ENCODE measurements at regions of chr1 and their contacts with region 1.

Region 1: DNA sequence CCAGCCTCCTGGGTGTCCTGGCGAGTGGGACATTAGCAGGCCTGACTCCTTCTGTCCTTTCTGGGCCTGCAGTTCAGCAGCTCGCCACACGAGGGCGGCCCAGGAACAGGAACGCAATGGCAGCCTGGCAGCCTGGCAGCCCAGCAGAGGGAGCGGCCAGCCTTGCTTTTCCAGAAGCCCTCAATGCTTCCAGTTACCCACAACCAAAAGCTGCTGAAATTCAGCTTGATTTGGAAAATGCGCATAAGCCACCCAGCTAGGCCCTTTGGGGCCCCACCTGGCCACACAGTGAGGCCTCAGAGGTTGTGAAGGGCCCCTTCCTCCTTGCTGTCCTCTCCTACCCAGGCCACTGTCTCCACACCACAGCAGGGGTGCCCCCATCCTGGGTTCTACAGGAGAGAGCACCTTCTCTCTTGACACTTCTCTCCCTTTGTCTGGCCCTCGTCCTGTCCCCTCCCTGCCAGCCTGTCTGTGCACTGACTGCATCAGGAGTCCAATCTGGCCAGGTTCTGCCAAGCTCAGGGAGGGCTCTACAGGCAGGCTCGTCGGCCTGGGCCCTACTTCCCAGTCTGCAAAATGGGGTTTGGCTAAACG is 103.4 kb upstream of the VAMP3 start:
- DNase-seq: peak; percentile 69 to 81
- ATAC-seq: peak; percentile 83 to 85
- H3K4me3 ChIP-seq: no peak overlapping the region
- H3K27ac ChIP-seq: no peak overlapping the region
- H3K4me1 ChIP-seq: peaks cover 4 to 6% of the 10 kb centered on the region in 2 donors
- H3K27me3 ChIP-seq: no peaks in the 10 kb centered on the region
- CTCF ChIP-seq: peak; percentile 99 to 100 (median 100)
- POLR2A ChIP-seq: no peak

Region 2: DNA sequence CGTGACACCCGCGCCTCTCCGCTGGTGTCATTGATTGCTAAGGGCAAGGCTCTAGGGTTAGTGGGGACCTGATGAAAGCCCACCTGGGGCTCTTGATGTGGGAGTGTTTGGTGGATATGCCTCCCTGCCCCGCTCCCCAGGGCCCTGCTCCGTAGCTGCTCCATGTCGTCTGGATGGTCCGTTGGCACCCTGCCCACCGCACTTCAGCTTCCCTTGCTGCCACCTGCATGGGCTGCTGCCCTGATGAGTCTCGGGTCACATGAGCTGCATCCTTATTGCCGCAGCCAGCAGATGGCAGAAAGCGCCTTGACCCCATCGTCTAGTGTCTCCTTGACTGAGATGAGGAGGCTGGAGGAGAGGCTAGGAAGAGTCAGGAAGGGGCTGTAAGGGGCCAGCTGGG is 443.1 kb before region 1 on chr1:
- in situ Hi-C with region 1: no loop called
- intact Hi-C with region 1: no loop called
- DNase-seq: no peak
- ATAC-seq: peak in 1 of 2 donors; percentile 50
- H3K4me3 ChIP-seq: no peak overlapping the region
- H3K27ac ChIP-seq: no peak overlapping the region
- H3K4me1 ChIP-seq: no peaks in the 10 kb centered on the region
- H3K27me3 ChIP-seq: no peaks in the 10 kb centered on the region
- CTCF ChIP-seq: peak in 2 of 5 experiments; percentile 13 to 33
- POLR2A ChIP-seq: no peak

Region 3: GRCh38 chr1:7745791-7746190 is 78.1 kb after region 1 on chr1:
- in situ Hi-C with region 1: loop called (anchors 5 kb)
- intact Hi-C with region 1: no loop called
- DNase-seq: no peak
- ATAC-seq: no peak
- H3K4me3 ChIP-seq: no peak overlapping the region
- H3K27ac ChIP-seq: no peak overlapping the region
- H3K4me1 ChIP-seq: no peaks in the 10 kb centered on the region
- H3K27me3 ChIP-seq: no peaks in the 10 kb centered on the region
- CTCF ChIP-seq: no peak
- POLR2A ChIP-seq: no peak

Region 4: GRCh38 chr1:7752512-7753417 is 85.0 kb after region 1 on chr1:
- in situ Hi-C with region 1: loop called (anchors 5 kb)
- intact Hi-C with region 1: loop called (anchors 1 kb)
- DNase-seq: peak; percentile 19 to 27
- ATAC-seq: peak; percentile 55 to 63
- H3K4me3 ChIP-seq: peak overlapping the region in 3 of 4 donors; percentile 12 to 38 (median 28)
- H3K27ac ChIP-seq: no peak overlapping the region
- H3K4me1 ChIP-seq: no peaks in the 10 kb centered on the region
- H3K27me3 ChIP-seq: no peaks in the 10 kb centered on the region
- CTCF ChIP-seq: peak; percentile 81 to 91 (median 83)
- POLR2A ChIP-seq: no peak

Region 5: GRCh38 chr1:7902478-7903085 is 234.9 kb after region 1 on chr1:
- in situ Hi-C with region 1: loop called in 3 of 4 experiments (anchors 25 kb)
- intact Hi-C with region 1: no loop called
- DNase-seq: peak; percentile 32
- ATAC-seq: peak; percentile 74 to 89
- H3K4me3 ChIP-seq: peak overlapping the region; percentile 15 to 51 (median 27)
- H3K27ac ChIP-seq: no peak overlapping the region
- H3K4me1 ChIP-seq: no peaks in the 10 kb centered on the region
- H3K27me3 ChIP-seq: no peaks in the 10 kb centered on the region
- CTCF ChIP-seq: peak; percentile 43 to 67 (median 62)
- POLR2A ChIP-seq: no peak

Region 6: GRCh38 chr1:9152535-9152934 is 1484.8 kb after region 1 on chr1:
- in situ Hi-C with region 1: no loop called
- intact Hi-C with region 1: no loop called
- DNase-seq: no peak
- ATAC-seq: no peak
- H3K4me3 ChIP-seq: no peak overlapping the region
- H3K27ac ChIP-seq: peak overlapping the region; percentile 52 to 74 (median 64)
- H3K4me1 ChIP-seq: peaks cover 11% of the 10 kb centered on the region in 2 donors
- H3K27me3 ChIP-seq: no peaks in the 10 kb centered on the region
- CTCF ChIP-seq: no peak
- POLR2A ChIP-seq: no peak